ENCODE measurements at regions of chr11 and their contacts with region 1.

Region 1: DNA sequence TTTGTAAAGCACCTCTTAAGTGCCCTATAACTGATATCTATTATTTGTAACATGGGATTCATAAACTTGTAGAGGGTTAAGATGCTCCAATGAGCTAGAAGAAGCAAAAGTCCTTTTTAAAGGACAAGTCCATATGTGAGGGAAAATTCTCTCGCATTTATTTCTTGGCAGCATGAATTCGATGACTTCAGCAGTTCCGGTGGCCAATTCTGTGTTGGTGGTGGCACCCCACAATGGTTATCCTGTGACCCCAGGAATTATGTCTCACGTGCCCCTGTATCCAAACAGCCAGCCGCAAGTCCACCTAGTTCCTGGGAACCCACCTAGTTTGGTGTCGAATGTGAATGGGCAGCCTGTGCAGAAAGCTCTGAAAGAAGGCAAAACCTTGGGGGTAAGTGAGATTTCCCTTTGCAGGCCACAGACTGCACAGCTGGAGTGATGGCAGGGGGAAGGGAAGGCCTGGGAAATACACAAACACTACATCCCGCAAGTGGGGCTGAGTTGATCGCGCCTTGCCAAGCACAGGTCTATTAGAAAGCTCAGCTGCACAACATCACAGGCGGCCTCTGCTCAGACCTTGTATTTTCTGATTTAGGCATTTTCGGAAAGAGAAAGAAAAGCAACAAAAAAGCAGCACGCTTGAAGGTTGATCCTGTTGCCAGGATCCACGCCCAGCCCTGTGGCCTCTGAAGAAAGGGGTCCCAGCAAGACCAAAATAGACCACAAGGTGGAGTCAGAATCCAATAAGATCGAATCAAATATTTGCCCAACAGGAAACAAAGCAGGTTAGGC is 1.5 kb downstream of the MS4A8 start:
- DNase-seq: no peak
- ATAC-seq: no peak
- H3K4me3 ChIP-seq: no peak overlapping the region
- H3K27ac ChIP-seq: no peak overlapping the region
- H3K4me1 ChIP-seq: no peaks in the 10 kb centered on the region
- H3K27me3 ChIP-seq: peaks cover 0 to 4% (median 0%) of the 10 kb centered on the region in 7 donors
- CTCF ChIP-seq: peak in 3 of 9 donors; percentile 9 to 22 (median 18)

Region 2: DNA sequence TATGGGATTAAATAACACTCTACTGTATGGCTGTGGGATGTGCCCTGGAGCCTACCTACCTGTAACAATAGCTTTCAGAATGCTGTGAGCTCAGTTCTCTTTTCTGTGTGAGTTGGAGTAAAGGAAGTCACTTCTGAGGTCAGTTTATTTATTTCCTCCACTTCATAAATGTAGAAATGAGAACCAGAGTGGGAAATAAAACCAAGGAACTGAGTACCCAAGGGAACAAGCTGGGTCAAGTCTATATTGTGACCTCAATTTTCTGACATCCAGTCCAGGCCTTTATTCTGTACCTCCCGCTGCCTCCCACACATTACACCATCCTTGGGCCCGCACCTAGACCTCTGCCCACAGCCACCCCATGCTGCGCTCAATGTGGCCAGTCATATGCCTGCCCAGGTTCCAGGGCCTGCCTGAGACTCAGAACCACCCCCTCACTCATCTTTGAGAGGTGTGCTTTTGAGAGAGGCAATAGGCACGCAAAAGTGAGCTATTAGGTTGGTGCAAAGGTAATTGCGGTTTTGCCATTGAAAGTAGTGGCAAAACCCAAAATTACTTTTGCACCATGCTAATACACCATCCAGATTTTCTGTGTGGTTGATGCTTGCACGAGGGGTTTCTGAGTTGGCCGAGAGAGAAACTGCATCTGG is 364.0 kb before region 1 on chr11:
- intact Hi-C with region 1: loop called in 1 of 10 experiments (anchors 5 kb)
- DNase-seq: no peak
- ATAC-seq: peak in 2 of 8 donors; percentile 41 to 49
- H3K4me3 ChIP-seq: no peak overlapping the region
- H3K27ac ChIP-seq: no peak overlapping the region
- H3K4me1 ChIP-seq: peaks cover 0 to 29% (median 0%) of the 10 kb centered on the region in 9 donors
- H3K27me3 ChIP-seq: peaks cover 0 to 6% (median 0%) of the 10 kb centered on the region in 7 donors
- CTCF ChIP-seq: no peak

Region 3: DNA sequence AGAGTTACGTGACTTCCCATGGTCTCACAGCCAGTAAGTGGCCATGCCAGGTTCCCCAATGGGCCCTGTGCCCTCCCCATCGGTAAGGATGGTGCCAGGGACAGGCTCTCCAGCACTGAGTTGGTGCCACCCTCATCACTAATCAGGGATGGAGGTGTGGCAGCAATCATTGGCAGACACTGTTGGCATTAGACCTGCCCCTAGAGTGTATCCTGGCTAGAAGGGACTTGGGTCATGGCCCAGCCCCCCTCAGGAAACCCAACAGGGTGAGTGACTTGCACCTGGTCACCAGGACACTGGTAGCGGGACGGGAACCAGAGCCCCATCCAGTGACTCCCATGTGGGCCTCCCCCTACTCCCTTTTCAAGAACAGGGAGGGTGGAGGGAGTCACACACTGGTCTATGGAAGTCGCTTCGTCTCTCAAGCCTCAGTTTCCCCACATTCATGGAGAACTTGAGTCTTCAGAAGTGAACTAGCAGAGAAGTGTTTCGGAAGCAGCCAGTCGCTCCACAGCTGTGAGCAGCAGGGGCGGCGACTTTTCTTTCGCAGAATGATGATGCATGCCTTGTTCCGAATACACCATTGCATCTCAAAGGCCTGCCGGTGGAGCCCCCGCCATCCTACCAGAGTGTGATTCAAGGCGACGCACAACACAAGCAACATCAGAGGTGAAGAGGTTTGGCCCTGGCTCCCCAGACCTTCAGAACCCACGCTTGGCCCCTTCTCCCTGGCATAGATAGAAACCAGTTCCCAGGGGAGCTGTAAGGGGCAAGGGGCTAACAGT is 97.2 kb after region 1 on chr11:
- intact Hi-C with region 1: no loop called
- DNase-seq: no peak
- ATAC-seq: no peak
- H3K4me3 ChIP-seq: no peak overlapping the region
- H3K27ac ChIP-seq: no peak overlapping the region
- H3K4me1 ChIP-seq: no peaks in the 10 kb centered on the region
- H3K27me3 ChIP-seq: peaks cover 0 to 14% (median 7%) of the 10 kb centered on the region in 7 donors
- CTCF ChIP-seq: no peak